ENCODE measurements at regions of chr5 and their contacts with region 1.

Region 1: GRCh38 chr5:134534726-134535110 is 9.2 kb downstream of the JADE2 start:
- DNase-seq: no peak
- ATAC-seq: no peak
- H3K4me3 ChIP-seq: no peak overlapping the region
- H3K4me3 Mint-ChIP-seq: peak overlapping the region in 1 of 10 donors; percentile 91
- H3K27ac ChIP-seq: peak overlapping the region; percentile 15
- H3K27ac Mint-ChIP-seq: peak overlapping the region in 6 of 9 donors; percentile 12 to 80 (median 38)
- H3K4me1 ChIP-seq: peaks cover 51 to 60% of the 10 kb centered on the region in 2 donors
- H3K4me1 Mint-ChIP-seq: peaks cover 55 to 89% (median 83%) of the 10 kb centered on the region in 7 donors
- H3K27me3 ChIP-seq: no peaks in the 10 kb centered on the region
- H3K27me3 Mint-ChIP-seq: no peaks in the 10 kb centered on the region

Region 2: GRCh38 chr5:134549714-134550113 is 15.0 kb after region 1 on chr5:
- CTCF ChIA-PET with region 1: interaction called, 3 read pairs
- POLR2A ChIA-PET with region 1: interaction called, 3 read pairs
- intact Hi-C with region 1: loop called in 1 of 2 experiments (anchors 2 kb)
- DNase-seq: no peak
- ATAC-seq: no peak
- H3K4me3 ChIP-seq: no peak overlapping the region
- H3K4me3 Mint-ChIP-seq: no peak overlapping the region
- H3K27ac ChIP-seq: no peak overlapping the region
- H3K27ac Mint-ChIP-seq: peak overlapping the region in 5 of 9 donors; percentile 41 to 83 (median 73)
- H3K4me1 ChIP-seq: peaks cover 27 to 28% of the 10 kb centered on the region in 2 donors
- H3K4me1 Mint-ChIP-seq: peaks cover 28 to 77% (median 63%) of the 10 kb centered on the region in 7 donors
- H3K27me3 ChIP-seq: no peaks in the 10 kb centered on the region
- H3K27me3 Mint-ChIP-seq: no peaks in the 10 kb centered on the region